ENCODE measurements at regions of chr1 and their contacts with region 1.

Region 1: GRCh38 chr1:164780863-164781262 is 221.9 kb downstream of the PBX1 start:
- DNase-seq: no peak
- H3K4me3 ChIP-seq: no peak overlapping the region
- H3K27ac ChIP-seq: peak overlapping the region; percentile 48 to 61 (median 57)
- H3K4me1 ChIP-seq: peaks cover 3 to 42% (median 21%) of the 10 kb centered on the region in 4 donors
- H3K27me3 ChIP-seq: no peaks in the 10 kb centered on the region
- CTCF ChIP-seq: no peak
- EP300 ChIP-seq: no peak
- POLR2A ChIP-seq: no peak

Region 2: GRCh38 chr1:164558461-164559341 is 222.2 kb before region 1 on chr1 and contains the start of gene PBX1:
- in situ Hi-C with region 1: loop called in 2 of 4 experiments (anchors 10 kb)
- intact Hi-C with region 1: loop called (anchors 5 kb)
- DNase-seq: peak; percentile 97
- H3K4me3 ChIP-seq: peak within 1 kb of the TSS; percentile 43 to 90 (median 72)
- H3K27ac ChIP-seq: peak within 1 kb of the TSS; percentile 87 to 89 (median 87)
- H3K4me1 ChIP-seq: peaks cover 0 to 19% (median 1%) of the 10 kb centered on the region in 4 donors
- H3K27me3 ChIP-seq: no peaks in the 10 kb centered on the region
- CTCF ChIP-seq: no peak
- EP300 ChIP-seq: no peak
- POLR2A ChIP-seq: peak; percentile 80
- total RNA-seq, gene PBX1: 46.8 to 77.2 (median 50.7) TPM

Region 3: GRCh38 chr1:164683235-164683634 is 97.6 kb before region 1 on chr1:
- in situ Hi-C with region 1: no loop called
- intact Hi-C with region 1: no loop called
- DNase-seq: no peak
- H3K4me3 ChIP-seq: no peak overlapping the region
- H3K27ac ChIP-seq: peak overlapping the region; percentile 6 to 51 (median 34)
- H3K4me1 ChIP-seq: peaks cover 12 to 33% (median 22%) of the 10 kb centered on the region in 4 donors
- H3K27me3 ChIP-seq: no peaks in the 10 kb centered on the region
- CTCF ChIP-seq: no peak
- EP300 ChIP-seq: no peak
- POLR2A ChIP-seq: no peak

Region 4: GRCh38 chr1:166638137-166638536 is 1857.3 kb after region 1 on chr1:
- in situ Hi-C with region 1: no loop called
- intact Hi-C with region 1: no loop called
- DNase-seq: no peak
- H3K4me3 ChIP-seq: no peak overlapping the region
- H3K27ac ChIP-seq: no peak overlapping the region
- H3K4me1 ChIP-seq: no peaks in the 10 kb centered on the region
- H3K27me3 ChIP-seq: no peaks in the 10 kb centered on the region
- CTCF ChIP-seq: no peak
- EP300 ChIP-seq: no peak
- POLR2A ChIP-seq: no peak